ENCODE measurements at regions of chr12 and their contacts with region 1.

Region 1: GRCh38 chr12:31928246-31929026 is 30.8 kb upstream of the RESF1 start:
- DNase-seq: peak; percentile 54
- H3K4me3 Mint-ChIP-seq: peak overlapping the region; percentile 75
- H3K27ac Mint-ChIP-seq: peak overlapping the region; percentile 90
- H3K4me1 Mint-ChIP-seq: peaks cover 45% of the 10 kb centered on the region
- H3K27me3 Mint-ChIP-seq: no peaks in the 10 kb centered on the region

Region 2: GRCh38 chr12:31874961-31875608 is 53.4 kb before region 1 on chr12:
- CTCF ChIA-PET with region 1: no interaction called
- POLR2A ChIA-PET with region 1: no interaction called
- intact Hi-C with region 1: loop called (anchors 2 kb)
- DNase-seq: peak; percentile 86
- H3K4me3 Mint-ChIP-seq: peak overlapping the region; percentile 47
- H3K27ac Mint-ChIP-seq: peak overlapping the region; percentile 97
- H3K4me1 Mint-ChIP-seq: peaks cover 27% of the 10 kb centered on the region
- H3K27me3 Mint-ChIP-seq: no peaks in the 10 kb centered on the region

Region 3: DNA sequence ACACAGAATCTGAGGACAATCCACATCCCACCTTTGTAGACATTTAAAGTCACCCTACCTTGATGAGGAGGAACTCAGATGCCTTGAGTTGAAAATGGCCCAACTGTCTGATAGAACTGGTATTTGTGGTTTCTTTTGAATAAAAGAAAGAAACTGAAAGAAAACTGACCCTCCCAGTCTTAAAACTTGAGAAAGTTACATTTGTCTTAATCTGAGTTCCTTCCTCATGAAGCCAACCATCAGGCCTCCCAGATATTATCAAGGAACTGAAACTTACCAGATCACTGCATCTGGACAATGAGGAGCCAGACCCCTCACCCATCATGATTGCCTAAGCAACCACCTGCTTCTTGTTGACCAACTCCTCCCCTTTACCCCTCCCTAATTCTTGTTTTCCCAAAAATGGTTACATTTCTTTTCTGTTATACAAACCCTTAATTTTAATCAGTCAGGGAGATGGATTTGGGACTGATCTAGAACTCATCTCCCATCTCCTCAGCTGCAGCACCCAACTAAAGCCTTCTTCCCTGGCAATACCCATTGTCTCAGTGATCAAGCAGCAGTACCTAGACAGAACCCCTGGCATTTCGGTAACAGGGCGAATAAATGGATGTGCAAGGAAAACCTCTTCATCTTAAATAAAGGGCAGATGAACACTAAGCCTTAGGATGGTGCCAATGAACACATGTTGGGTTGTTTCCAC is 41.2 kb before region 1 on chr12:
- CTCF ChIA-PET with region 1: no interaction called
- POLR2A ChIA-PET with region 1: no interaction called
- intact Hi-C with region 1: no loop called
- DNase-seq: no peak
- H3K4me3 Mint-ChIP-seq: no peak overlapping the region
- H3K27ac Mint-ChIP-seq: peak overlapping the region; percentile 39
- H3K4me1 Mint-ChIP-seq: peaks cover 29% of the 10 kb centered on the region
- H3K27me3 Mint-ChIP-seq: no peaks in the 10 kb centered on the region

Region 4: GRCh38 chr12:32312049-32312670 is 383.7 kb after region 1 on chr12:
- CTCF ChIA-PET with region 1: no interaction called
- POLR2A ChIA-PET with region 1: no interaction called
- intact Hi-C with region 1: no loop called
- DNase-seq: no peak
- H3K4me3 Mint-ChIP-seq: no peak overlapping the region
- H3K27ac Mint-ChIP-seq: no peak overlapping the region
- H3K4me1 Mint-ChIP-seq: no peaks in the 10 kb centered on the region
- H3K27me3 Mint-ChIP-seq: no peaks in the 10 kb centered on the region